ENCODE measurements at regions of chr3 and their contacts with region 1.

Region 1: GRCh38 chr3:13648060-13649001 is 99.4 kb downstream of the FBLN2 start:
- DNase-seq: peak; percentile 89
- ATAC-seq: peak; percentile 82
- H3K4me3 ChIP-seq: no peak overlapping the region
- H3K27ac ChIP-seq: no peak overlapping the region
- H3K4me1 ChIP-seq: peaks cover 10% of the 10 kb centered on the region
- H3K27me3 ChIP-seq: peaks cover 18% of the 10 kb centered on the region
- CTCF ChIP-seq: peak; percentile 97

Region 2: GRCh38 chr3:13091898-13092611 is 556.3 kb before region 1 on chr3:
- intact Hi-C with region 1: loop called (anchors 10 kb)
- DNase-seq: peak; percentile 91
- ATAC-seq: peak; percentile 91
- H3K4me3 ChIP-seq: no peak overlapping the region
- H3K27ac ChIP-seq: no peak overlapping the region
- H3K4me1 ChIP-seq: peaks cover 4% of the 10 kb centered on the region
- H3K27me3 ChIP-seq: no peaks in the 10 kb centered on the region
- CTCF ChIP-seq: peak; percentile 98

Region 3: GRCh38 chr3:13495921-13496723 is 152.2 kb before region 1 on chr3:
- intact Hi-C with region 1: loop called (anchors 5 kb)
- DNase-seq: peak; percentile 82
- ATAC-seq: peak; percentile 94
- H3K4me3 ChIP-seq: no peak overlapping the region
- H3K27ac ChIP-seq: no peak overlapping the region
- H3K4me1 ChIP-seq: peaks cover 6% of the 10 kb centered on the region
- H3K27me3 ChIP-seq: no peaks in the 10 kb centered on the region
- CTCF ChIP-seq: peak; percentile 91

Region 4: DNA sequence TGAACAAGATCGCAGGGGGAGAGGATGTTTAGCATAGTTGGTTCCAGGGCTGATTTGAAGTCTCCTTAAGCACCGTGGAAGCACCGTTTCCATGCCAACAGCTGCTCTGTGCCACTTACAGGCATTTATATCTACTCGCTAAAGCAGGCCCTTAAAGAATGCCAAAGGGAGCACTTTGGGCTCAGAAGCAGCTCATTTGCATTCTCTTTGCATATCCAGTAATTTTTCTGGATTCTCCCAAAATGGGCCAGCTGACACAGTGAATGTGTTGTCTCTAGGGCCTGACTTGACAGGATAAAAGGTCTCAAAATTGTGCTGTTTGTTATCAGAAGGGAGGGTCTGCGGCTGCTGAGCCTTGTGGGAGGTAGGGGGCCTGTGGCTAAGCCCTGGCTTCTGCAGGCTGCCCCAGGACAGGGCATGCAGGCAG is 39.2 kb after region 1 on chr3:
- intact Hi-C with region 1: no loop called
- DNase-seq: no peak
- ATAC-seq: peak; percentile 57
- H3K4me3 ChIP-seq: no peak overlapping the region
- H3K27ac ChIP-seq: no peak overlapping the region
- H3K4me1 ChIP-seq: no peaks in the 10 kb centered on the region
- H3K27me3 ChIP-seq: no peaks in the 10 kb centered on the region
- CTCF ChIP-seq: no peak

Measured in upper lobe of right lung (tissue), 1 donor.